ENCODE measurements at regions of chr22 and their contacts with region 1.

Region 1: DNA sequence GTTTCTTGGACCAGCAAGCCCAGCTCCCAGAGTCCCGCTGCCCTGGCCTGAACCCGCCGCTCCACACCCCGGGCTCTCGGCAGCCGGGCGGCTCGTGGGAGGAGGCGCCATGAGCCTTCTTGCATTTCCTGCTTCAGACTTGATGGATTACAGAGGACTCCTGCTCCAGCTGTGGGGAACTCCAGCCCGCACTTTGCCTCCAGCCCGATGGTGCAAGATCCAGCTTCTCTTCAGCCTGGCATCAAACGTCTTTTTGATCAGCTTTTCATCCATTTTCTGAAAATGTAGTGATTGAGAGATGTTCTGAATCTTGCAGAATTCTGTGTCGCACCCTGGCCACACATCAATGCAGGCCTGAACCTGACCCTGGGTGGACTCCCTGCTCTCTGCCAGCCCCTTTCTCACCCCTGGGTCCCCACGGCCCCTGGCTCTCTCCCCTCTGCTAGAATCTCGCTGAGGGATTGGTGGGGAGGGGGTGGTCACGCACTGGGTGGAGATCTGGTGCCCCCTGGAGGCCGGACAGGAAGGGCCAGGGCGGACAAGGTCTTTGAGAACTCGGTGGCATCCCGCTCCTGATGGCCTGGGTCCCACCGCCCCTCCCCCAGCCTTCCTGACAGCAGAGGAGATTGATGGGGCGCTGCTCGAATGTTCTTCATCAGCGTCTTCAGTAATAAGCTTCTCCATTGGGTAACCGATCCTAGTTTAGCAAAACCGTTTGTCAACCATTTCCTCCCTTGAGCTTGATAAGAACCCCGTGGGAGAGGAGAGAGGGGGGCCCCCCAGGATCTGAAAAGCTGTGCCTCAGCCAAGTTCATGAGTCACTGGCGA is 12.1 kb upstream of the NFAM1 start:
- DNase-seq: peak; percentile 90
- H3K4me3 ChIP-seq: peak overlapping the region in 2 of 3 experiments; percentile 1 to 46
- H3K27ac ChIP-seq: no peak overlapping the region
- H3K4me1 ChIP-seq: peaks cover 10% of the 10 kb centered on the region
- H3K27me3 ChIP-seq: no peaks in the 10 kb centered on the region
- CTCF ChIP-seq: peak; percentile 70 to 83
- POLR2A ChIP-seq: no peak

Region 2: DNA sequence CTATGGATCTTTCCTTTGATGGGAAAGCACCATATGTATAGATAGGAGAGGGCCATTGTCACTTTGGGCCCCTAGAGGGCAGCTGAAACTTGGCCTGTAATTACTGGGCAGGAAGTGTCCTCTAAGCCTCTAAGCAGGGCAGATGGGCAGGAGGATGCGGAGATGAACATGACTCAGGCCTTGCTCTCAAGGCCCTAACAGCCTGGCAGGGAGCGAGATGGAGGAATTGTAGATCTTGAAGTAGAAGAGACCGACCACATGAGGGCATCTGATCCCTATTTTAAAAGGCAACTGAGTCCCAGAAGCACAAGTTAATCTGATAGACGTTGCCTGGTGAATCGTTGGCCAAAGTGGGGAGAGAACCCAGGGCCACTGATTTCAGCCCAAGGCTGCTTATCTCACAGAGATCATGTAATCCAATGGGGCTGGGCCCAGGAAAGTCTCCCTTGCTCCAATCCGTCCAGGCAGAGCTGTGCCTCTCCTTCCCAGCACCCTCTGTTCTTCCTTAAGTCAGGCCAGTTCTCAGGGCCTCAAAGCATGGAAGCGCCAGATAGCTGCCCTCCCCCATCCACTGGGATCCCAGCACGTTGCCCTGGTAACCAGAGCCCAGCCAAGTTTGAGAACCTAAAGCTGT is 477.6 kb before region 1 on chr22:
- CTCF ChIA-PET with region 1: interaction called, 16 read pairs
- POLR2A ChIA-PET with region 1: interaction called, 6 read pairs
- dilution Hi-C with region 1: no loop called
- intact Hi-C with region 1: no loop called
- DNase-seq: peak; percentile 72
- H3K4me3 ChIP-seq: no peak overlapping the region
- H3K27ac ChIP-seq: no peak overlapping the region
- H3K4me1 ChIP-seq: peaks cover 4% of the 10 kb centered on the region
- H3K27me3 ChIP-seq: no peaks in the 10 kb centered on the region
- CTCF ChIP-seq: peak; percentile 34 to 48
- POLR2A ChIP-seq: no peak

Region 3: DNA sequence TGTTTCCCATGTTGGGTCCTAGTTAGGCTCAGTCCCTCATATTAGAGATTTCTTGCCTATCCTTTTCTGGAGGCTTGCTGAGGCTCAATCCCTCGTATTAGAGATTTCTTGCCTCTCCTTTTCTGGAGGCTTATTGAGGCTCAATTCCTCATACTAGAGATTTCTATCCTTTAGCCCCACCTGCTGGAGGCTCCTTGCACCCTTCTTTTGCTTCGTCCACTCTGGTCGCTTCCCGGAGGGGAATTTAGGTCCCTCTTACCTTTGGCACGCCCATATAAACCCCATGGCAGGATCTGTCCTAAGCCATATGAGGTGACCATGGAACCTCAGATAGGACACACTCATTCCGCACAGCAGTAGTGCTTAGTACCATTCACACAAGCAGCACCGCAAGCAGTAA is 329.6 kb before region 1 on chr22:
- CTCF ChIA-PET with region 1: interaction called, 10 read pairs
- POLR2A ChIA-PET with region 1: no interaction called
- dilution Hi-C with region 1: no loop called
- intact Hi-C with region 1: no loop called
- DNase-seq: peak; percentile 41
- H3K4me3 ChIP-seq: no peak overlapping the region
- H3K27ac ChIP-seq: no peak overlapping the region
- H3K4me1 ChIP-seq: no peaks in the 10 kb centered on the region
- H3K27me3 ChIP-seq: no peaks in the 10 kb centered on the region
- CTCF ChIP-seq: peak; percentile 32 to 56
- POLR2A ChIP-seq: no peak

Region 4: GRCh38 chr22:42169055-42169469 is 275.2 kb before region 1 on chr22:
- CTCF ChIA-PET with region 1: interaction called, 27 read pairs
- POLR2A ChIA-PET with region 1: no interaction called
- dilution Hi-C with region 1: no loop called
- intact Hi-C with region 1: no loop called
- DNase-seq: peak; percentile 81
- H3K4me3 ChIP-seq: no peak overlapping the region
- H3K27ac ChIP-seq: no peak overlapping the region
- H3K4me1 ChIP-seq: peaks cover 11% of the 10 kb centered on the region
- H3K27me3 ChIP-seq: no peaks in the 10 kb centered on the region
- CTCF ChIP-seq: peak; percentile 91 to 97
- POLR2A ChIP-seq: no peak

Region 5: DNA sequence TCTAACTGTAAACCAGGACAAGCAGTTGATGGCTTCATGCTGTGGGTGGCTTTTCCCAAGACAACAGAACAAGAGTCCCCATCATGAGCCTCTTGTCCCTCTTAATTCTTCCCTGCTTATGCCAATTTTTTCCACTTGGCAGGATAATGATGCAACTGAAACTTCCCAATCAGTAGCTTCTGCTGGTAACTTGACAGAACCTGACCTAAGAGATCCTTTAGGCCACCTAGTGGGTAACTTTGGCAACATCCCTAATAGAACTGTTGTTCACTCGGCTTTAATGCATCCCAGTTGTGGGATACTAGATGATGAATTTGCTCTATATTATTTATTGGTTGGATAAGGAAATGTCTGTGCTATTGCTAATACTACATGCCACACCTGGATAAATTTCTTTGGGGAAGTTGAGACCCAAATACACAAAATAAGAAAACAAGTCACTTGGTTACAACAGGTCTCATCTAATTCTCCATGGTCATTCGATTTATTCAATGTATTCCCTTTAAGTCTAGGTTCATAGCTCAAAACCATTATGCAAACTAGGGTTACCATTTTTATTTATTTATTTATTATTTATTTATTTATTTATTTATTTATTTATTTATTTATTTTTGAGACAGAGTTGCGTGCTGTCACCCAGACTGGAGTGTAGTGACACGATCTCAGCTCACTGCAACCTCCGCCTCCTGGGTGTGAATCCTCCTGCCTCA is 29.3 kb after region 1 on chr22:
- CTCF ChIA-PET with region 1: interaction called, 28 read pairs
- POLR2A ChIA-PET with region 1: no interaction called
- dilution Hi-C with region 1: no loop called
- intact Hi-C with region 1: no loop called
- DNase-seq: peak; percentile 56
- H3K4me3 ChIP-seq: no peak overlapping the region
- H3K27ac ChIP-seq: no peak overlapping the region
- H3K4me1 ChIP-seq: no peaks in the 10 kb centered on the region
- H3K27me3 ChIP-seq: peaks cover 2 to 4% of the 10 kb centered on the region in 2 experiments
- CTCF ChIP-seq: peak; percentile 51 to 56
- POLR2A ChIP-seq: no peak